ENCODE measurements at regions of chr1 and their contacts with region 1.

Region 1: GRCh38 chr1:224052772-224053171 is 61.1 kb upstream of the FBXO28 start:
- DNase-seq: no peak
- ATAC-seq: no peak
- H3K4me3 Mint-ChIP-seq: no peak overlapping the region
- H3K27ac Mint-ChIP-seq: no peak overlapping the region
- H3K4me1 Mint-ChIP-seq: no peaks in the 10 kb centered on the region
- H3K27me3 Mint-ChIP-seq: peaks cover 7% of the 10 kb centered on the region

Region 2: GRCh38 chr1:224065455-224065854 is 12.7 kb after region 1 on chr1:
- CTCF ChIA-PET with region 1: interaction called, 21 read pairs
- POLR2A ChIA-PET with region 1: no interaction called
- intact Hi-C with region 1: no loop called
- DNase-seq: no peak
- ATAC-seq: no peak
- H3K4me3 Mint-ChIP-seq: no peak overlapping the region
- H3K27ac Mint-ChIP-seq: no peak overlapping the region
- H3K4me1 Mint-ChIP-seq: peaks cover 4% of the 10 kb centered on the region
- H3K27me3 Mint-ChIP-seq: peaks cover 7% of the 10 kb centered on the region